ENCODE measurements at regions of chr12 and their contacts with region 1.

Region 1: GRCh38 chr12:54579696-54580333 is 8.6 kb downstream of the PPP1R1A start:
- DNase-seq: no peak
- ATAC-seq: peak; percentile 99
- H3K4me3 ChIP-seq: no peak overlapping the region
- H3K27ac ChIP-seq: no peak overlapping the region
- H3K4me1 ChIP-seq: no peaks in the 10 kb centered on the region
- H3K27me3 ChIP-seq: no peaks in the 10 kb centered on the region; a peak in 1 of 4 replicates
- CTCF ChIP-seq: peak; percentile 87 to 100 (median 100)
- EP300 ChIP-seq: no peak
- POLR2A ChIP-seq: no peak
- RAD21 ChIP-seq: peak; percentile 74

Region 2: DNA sequence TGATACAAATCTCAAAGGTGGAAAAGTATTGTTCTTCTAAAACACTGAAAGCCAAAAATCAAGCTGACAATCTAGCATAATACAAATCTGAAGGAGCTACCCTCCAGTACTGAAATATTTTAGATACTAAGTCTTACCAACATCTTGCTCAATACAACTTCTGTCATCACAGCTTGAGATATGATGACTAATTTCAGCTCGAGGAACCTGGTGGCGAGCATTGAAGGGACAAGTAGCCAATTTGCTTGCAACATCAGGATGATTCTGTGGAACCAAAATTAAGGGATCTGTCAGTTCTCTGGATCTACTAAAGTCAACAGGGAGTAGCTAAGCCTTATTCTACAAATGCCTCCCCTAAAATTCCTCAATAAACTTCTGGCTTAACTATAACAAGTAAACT is 116.8 kb before region 1 on chr12:
- CTCF ChIA-PET with region 1: no interaction called
- POLR2A ChIA-PET with region 1: no interaction called
- RAD21 ChIA-PET with region 1: no interaction called
- SMC1A ChIA-PET with region 1: no interaction called
- in situ Hi-C with region 1: no loop called
- intact Hi-C with region 1: no loop called
- DNase-seq: no peak
- ATAC-seq: no peak
- H3K4me3 ChIP-seq: no peak overlapping the region
- H3K27ac ChIP-seq: no peak overlapping the region
- H3K4me1 ChIP-seq: peaks cover 3% of the 10 kb centered on the region; the same call in 1 of the 2 replicates
- H3K27me3 ChIP-seq: no peaks in the 10 kb centered on the region
- CTCF ChIP-seq: no peak
- EP300 ChIP-seq: no peak
- POLR2A ChIP-seq: no peak
- RAD21 ChIP-seq: no peak

Region 3: DNA sequence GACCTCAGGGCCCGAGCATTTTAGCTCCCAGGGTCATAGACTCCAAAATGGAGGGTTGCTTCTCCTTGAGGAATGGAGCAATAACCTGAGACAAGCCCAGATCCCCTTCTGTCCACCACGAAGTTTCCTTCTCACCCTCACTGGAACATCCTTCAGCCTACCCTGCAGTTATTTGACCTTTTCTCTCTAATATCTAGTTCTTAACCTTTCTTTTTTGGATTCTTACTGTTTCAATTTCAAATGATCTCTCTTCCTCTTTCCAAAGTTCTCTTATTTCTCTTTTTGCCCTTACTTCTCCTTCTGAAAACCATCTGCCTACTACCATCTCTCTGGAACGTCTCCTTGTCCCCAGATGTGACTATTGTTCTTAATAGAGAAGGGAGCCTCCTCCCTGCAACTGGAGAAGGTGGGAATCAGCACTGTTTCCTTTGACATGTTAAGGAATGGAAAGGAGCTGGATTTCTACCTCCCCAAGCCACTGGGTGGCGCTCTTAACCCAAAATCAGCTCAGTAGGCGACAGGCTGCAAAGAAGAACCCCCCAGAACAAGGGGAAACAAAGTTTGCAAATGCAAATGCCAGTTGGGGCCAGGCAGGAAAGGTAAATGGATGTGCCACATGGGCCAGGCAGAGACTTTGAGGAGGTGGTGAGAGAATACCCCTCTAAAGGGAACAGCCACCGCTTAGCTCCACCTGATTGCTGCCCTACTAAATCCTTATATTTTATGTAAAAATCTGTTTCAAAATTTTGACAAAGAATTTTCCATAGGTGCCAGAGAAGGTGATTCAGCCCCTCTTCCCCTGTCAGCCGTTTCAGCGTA is 52.8 kb before region 1 on chr12:
- CTCF ChIA-PET with region 1: interaction called, 23 read pairs
- POLR2A ChIA-PET with region 1: no interaction called
- RAD21 ChIA-PET with region 1: interaction called, 5 read pairs
- SMC1A ChIA-PET with region 1: interaction called, 4 read pairs
- in situ Hi-C with region 1: no loop called
- intact Hi-C with region 1: no loop called
- DNase-seq: no peak
- ATAC-seq: peak; percentile 58
- H3K4me3 ChIP-seq: no peak overlapping the region
- H3K27ac ChIP-seq: no peak overlapping the region
- H3K4me1 ChIP-seq: no peaks in the 10 kb centered on the region
- H3K27me3 ChIP-seq: no peaks in the 10 kb centered on the region
- CTCF ChIP-seq: peak; percentile 44 to 60 (median 58)
- EP300 ChIP-seq: no peak
- POLR2A ChIP-seq: no peak
- RAD21 ChIP-seq: peak; percentile 28; the same call in 1 of the 2 replicates

Region 4: GRCh38 chr12:54560374-54560858 is 19.4 kb before region 1 on chr12:
- CTCF ChIA-PET with region 1: interaction called, 41 read pairs
- POLR2A ChIA-PET with region 1: no interaction called
- RAD21 ChIA-PET with region 1: no interaction called
- SMC1A ChIA-PET with region 1: interaction called, 4 read pairs
- in situ Hi-C with region 1: no loop called
- intact Hi-C with region 1: no loop called
- DNase-seq: peak; percentile 65
- ATAC-seq: peak; percentile 100
- H3K4me3 ChIP-seq: peak overlapping the region; percentile 63
- H3K27ac ChIP-seq: no peak overlapping the region; the same call in 1 of the 2 replicates
- H3K4me1 ChIP-seq: peaks cover 19% of the 10 kb centered on the region
- H3K27me3 ChIP-seq: no peaks in the 10 kb centered on the region
- CTCF ChIP-seq: no peak
- EP300 ChIP-seq: no peak
- POLR2A ChIP-seq: peak; percentile 66
- RAD21 ChIP-seq: no peak

Region 5: DNA sequence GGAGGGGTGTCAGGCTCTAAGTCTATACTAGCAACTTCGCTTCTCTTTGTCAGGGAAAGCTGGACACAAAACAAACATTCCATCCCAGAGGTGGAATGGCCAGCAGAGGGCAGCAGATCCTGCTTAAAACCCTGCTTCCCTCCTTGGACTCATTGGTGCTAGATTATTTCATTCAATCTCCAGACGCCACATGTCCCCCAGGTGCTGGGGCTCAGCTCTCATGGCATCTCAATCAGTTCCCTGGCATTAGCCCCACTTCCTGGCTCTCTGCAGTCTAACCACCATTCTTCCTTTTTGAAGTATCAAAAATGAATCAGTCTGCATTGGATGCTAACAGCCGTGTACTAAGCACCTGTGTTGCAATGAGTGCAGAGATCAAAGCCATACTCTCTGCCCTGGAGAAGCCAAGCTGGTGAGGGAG is 16.7 kb after region 1 on chr12:
- CTCF ChIA-PET with region 1: interaction called, 45 read pairs
- POLR2A ChIA-PET with region 1: no interaction called
- RAD21 ChIA-PET with region 1: no interaction called
- SMC1A ChIA-PET with region 1: no interaction called
- in situ Hi-C with region 1: no loop called
- intact Hi-C with region 1: no loop called
- DNase-seq: no peak
- ATAC-seq: peak; percentile 84
- H3K4me3 ChIP-seq: no peak overlapping the region
- H3K27ac ChIP-seq: no peak overlapping the region
- H3K4me1 ChIP-seq: no peaks in the 10 kb centered on the region
- H3K27me3 ChIP-seq: peaks cover 0 to 3% of the 10 kb centered on the region in 2 experiments; a peak in 2 of 4 replicates
- CTCF ChIP-seq: peak; percentile 72 to 87 (median 87)
- EP300 ChIP-seq: no peak
- POLR2A ChIP-seq: no peak
- RAD21 ChIP-seq: peak; percentile 39; the same call in 1 of the 2 replicates

Region 6: GRCh38 chr12:54603173-54603814 is 23.5 kb after region 1 on chr12:
- CTCF ChIA-PET with region 1: interaction called, 45 read pairs
- POLR2A ChIA-PET with region 1: no interaction called
- RAD21 ChIA-PET with region 1: no interaction called
- SMC1A ChIA-PET with region 1: interaction called, 3 read pairs
- in situ Hi-C with region 1: no loop called
- intact Hi-C with region 1: no loop called
- DNase-seq: peak; percentile 21
- ATAC-seq: peak; percentile 99
- H3K4me3 ChIP-seq: no peak overlapping the region
- H3K27ac ChIP-seq: no peak overlapping the region
- H3K4me1 ChIP-seq: no peaks in the 10 kb centered on the region
- H3K27me3 ChIP-seq: no peaks in the 10 kb centered on the region; a peak in 1 of 4 replicates
- CTCF ChIP-seq: peak; percentile 81 to 92 (median 84)
- EP300 ChIP-seq: no peak
- POLR2A ChIP-seq: no peak
- RAD21 ChIP-seq: peak; percentile 78